ENCODE measurements at regions of chr1 and their contacts with region 1.

Region 1: DNA sequence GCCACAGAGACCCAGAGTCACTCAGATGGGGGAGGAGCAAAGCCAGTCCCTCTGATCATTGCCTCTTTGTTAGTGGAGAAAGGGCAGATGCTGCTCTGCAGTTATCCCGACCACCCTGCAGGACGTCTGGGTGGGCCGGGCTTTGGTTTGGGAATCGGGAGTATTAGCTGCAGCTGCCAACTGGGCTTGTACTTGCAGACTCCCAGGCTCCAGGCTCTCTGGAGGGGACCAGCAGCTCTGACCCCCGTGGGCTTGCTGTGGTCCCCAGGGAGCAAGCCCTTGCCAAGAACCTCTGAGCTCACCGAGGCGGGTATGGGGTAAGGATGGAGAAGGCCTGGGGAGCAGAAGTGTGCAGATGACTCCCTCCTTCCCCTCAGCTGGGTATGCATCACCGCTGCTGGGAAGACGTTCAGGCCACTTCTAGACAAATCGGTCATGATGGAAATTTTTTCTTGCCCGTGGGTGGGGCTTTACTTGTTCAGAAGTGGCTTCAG is 21.6 kb downstream of the MAPKAPK2 start:
- DNase-seq: no peak
- ATAC-seq: no peak
- H3K4me3 Mint-ChIP-seq: no peak overlapping the region
- H3K27ac Mint-ChIP-seq: no peak overlapping the region
- H3K4me1 Mint-ChIP-seq: peaks cover 76% of the 10 kb centered on the region
- H3K27me3 Mint-ChIP-seq: no peaks in the 10 kb centered on the region

Region 2: GRCh38 chr1:206637605-206638004 is 68.7 kb before region 1 on chr1:
- CTCF ChIA-PET with region 1: no interaction called
- POLR2A ChIA-PET with region 1: no interaction called
- DNase-seq: no peak
- ATAC-seq: no peak
- H3K4me3 Mint-ChIP-seq: no peak overlapping the region
- H3K27ac Mint-ChIP-seq: no peak overlapping the region
- H3K4me1 Mint-ChIP-seq: peaks cover 27% of the 10 kb centered on the region
- H3K27me3 Mint-ChIP-seq: peaks cover 12% of the 10 kb centered on the region

Region 3: GRCh38 chr1:206716870-206717673 is 10.7 kb after region 1 on chr1:
- CTCF ChIA-PET with region 1: interaction called, 21 read pairs
- POLR2A ChIA-PET with region 1: interaction called, 4 read pairs
- DNase-seq: peak; percentile 52
- ATAC-seq: peak; percentile 67
- H3K4me3 Mint-ChIP-seq: peak overlapping the region; percentile 26
- H3K27ac Mint-ChIP-seq: peak overlapping the region; percentile 75
- H3K4me1 Mint-ChIP-seq: peaks cover 69% of the 10 kb centered on the region
- H3K27me3 Mint-ChIP-seq: no peaks in the 10 kb centered on the region

Measured in activated CD8-positive, alpha-beta T cell treated with anti-CD3 and anti-CD28 coated beads, Interleukin-2, amount 10 ng/mL, durations not matched to agents 7 days and 5 days (primary cell).